Ovary (tissue), 10 donors: ENCODE measurements at regions of chr16 and their contacts with region 1.

Region 1: GRCh38 chr16:30429678-30430427 is at the start of gene DCTPP1:
- DNase-seq: peak; percentile 92 to 97 (median 94)
- H3K4me3 ChIP-seq: peak within 1 kb of the TSS; percentile 57
- H3K27ac ChIP-seq: peak within 1 kb of the TSS in 1 of 2 donors; percentile 71
- H3K4me1 ChIP-seq: peaks cover 7% of the 10 kb centered on the region
- H3K27me3 ChIP-seq: no peaks in the 10 kb centered on the region
- CTCF ChIP-seq: peak; percentile 61 to 91 (median 83)
- EP300 ChIP-seq: no peak
- POLR2A ChIP-seq: peak; percentile 22
- total RNA-seq, gene DCTPP1: 13.2 to 34.4 (median 22.9) TPM

Region 2: DNA sequence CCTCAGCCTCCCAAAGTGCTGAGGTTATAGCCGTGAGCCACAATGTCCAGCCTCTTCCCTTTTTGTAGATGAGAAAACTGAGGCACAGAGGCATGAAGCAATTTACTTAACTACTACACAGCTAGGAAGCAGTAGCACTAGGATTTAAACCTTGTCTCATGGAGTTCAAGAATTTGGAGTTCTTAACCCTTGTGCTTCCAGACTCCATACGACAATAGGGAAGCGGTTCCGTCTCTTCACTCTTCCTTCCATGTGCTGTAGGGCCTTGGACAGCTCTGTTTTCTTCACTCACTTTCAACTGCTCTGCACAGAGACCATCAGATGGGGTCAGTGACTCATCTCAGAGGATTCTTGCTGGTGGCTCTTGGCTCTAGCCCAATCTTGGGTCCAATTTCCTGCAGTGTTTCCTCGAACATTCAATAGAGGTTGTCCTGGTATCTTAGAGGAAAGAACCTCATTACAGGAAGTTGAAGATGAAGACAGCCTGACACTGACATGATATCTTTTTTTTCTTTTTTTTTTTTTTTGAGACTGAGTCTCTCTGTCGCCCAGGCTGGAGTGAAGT is 62.0 kb after region 1 on chr16:
- intact Hi-C with region 1: no loop called
- DNase-seq: no peak
- H3K4me3 ChIP-seq: no peak overlapping the region
- H3K27ac ChIP-seq: no peak overlapping the region
- H3K4me1 ChIP-seq: no peaks in the 10 kb centered on the region
- H3K27me3 ChIP-seq: no peaks in the 10 kb centered on the region
- CTCF ChIP-seq: no peak
- EP300 ChIP-seq: no peak
- POLR2A ChIP-seq: no peak

Region 3: GRCh38 chr16:30509081-30509765 is 79.4 kb after region 1 on chr16:
- intact Hi-C with region 1: no loop called
- DNase-seq: no peak
- H3K4me3 ChIP-seq: no peak overlapping the region
- H3K27ac ChIP-seq: no peak overlapping the region
- H3K4me1 ChIP-seq: no peaks in the 10 kb centered on the region
- H3K27me3 ChIP-seq: no peaks in the 10 kb centered on the region
- CTCF ChIP-seq: no peak
- EP300 ChIP-seq: no peak
- POLR2A ChIP-seq: no peak

Region 4: GRCh38 chr16:30557957-30558788 is 128.3 kb after region 1 on chr16 and contains the start of gene ZNF764:
- intact Hi-C with region 1: loop called in 1 of 4 experiments (anchors 10 kb)
- DNase-seq: peak; percentile 97 to 99 (median 98)
- H3K4me3 ChIP-seq: peak within 1 kb of the TSS; percentile 80
- H3K27ac ChIP-seq: peak within 1 kb of the TSS; percentile 85 to 93
- H3K4me1 ChIP-seq: no peaks in the 10 kb centered on the region
- H3K27me3 ChIP-seq: no peaks in the 10 kb centered on the region
- CTCF ChIP-seq: no peak
- EP300 ChIP-seq: no peak
- POLR2A ChIP-seq: peak; percentile 32
- total RNA-seq, gene ZNF764: 6.8 to 14.5 (median 13.2) TPM